Heart right ventricle (tissue), 16 donors: ENCODE measurements at regions of chr19 and their contacts with region 1.

Region 1: GRCh38 chr19:14689598-14690503 is at the start of gene ZNF333:
- DNase-seq: peak; percentile 97 to 99
- ATAC-seq: peak; percentile 98 to 100 (median 99)
- H3K4me3 ChIP-seq: peak within 1 kb of the TSS; percentile 59 to 96 (median 88)
- H3K27ac ChIP-seq: peak within 1 kb of the TSS; percentile 47 to 98 (median 95)
- H3K4me1 ChIP-seq: peaks cover 3 to 28% (median 13%) of the 10 kb centered on the region in 9 donors
- H3K27me3 ChIP-seq: no peaks in the 10 kb centered on the region
- CTCF ChIP-seq: no peak
- total RNA-seq, gene ZNF333: 5.8 to 10.3 (median 8.5) TPM

Region 2: GRCh38 chr19:14571695-14572490 is 118.0 kb before region 1 on chr19 and contains the start of gene NDUFB7:
- intact Hi-C with region 1: loop called in 9 of 10 experiments (anchors 2 to 10 kb)
- DNase-seq: peak; percentile 89 to 92
- ATAC-seq: peak; percentile 95 to 98 (median 98)
- H3K4me3 ChIP-seq: peak within 1 kb of the TSS; percentile 69 to 99 (median 96)
- H3K27ac ChIP-seq: peak within 1 kb of the TSS; percentile 70 to 95 (median 92)
- H3K4me1 ChIP-seq: peaks cover 4 to 47% (median 32%) of the 10 kb centered on the region in 9 donors
- H3K27me3 ChIP-seq: no peaks in the 10 kb centered on the region
- CTCF ChIP-seq: peak; percentile 53 to 91 (median 70)
- total RNA-seq, gene NDUFB7: 347 to 525 (median 467) TPM

Region 3: DNA sequence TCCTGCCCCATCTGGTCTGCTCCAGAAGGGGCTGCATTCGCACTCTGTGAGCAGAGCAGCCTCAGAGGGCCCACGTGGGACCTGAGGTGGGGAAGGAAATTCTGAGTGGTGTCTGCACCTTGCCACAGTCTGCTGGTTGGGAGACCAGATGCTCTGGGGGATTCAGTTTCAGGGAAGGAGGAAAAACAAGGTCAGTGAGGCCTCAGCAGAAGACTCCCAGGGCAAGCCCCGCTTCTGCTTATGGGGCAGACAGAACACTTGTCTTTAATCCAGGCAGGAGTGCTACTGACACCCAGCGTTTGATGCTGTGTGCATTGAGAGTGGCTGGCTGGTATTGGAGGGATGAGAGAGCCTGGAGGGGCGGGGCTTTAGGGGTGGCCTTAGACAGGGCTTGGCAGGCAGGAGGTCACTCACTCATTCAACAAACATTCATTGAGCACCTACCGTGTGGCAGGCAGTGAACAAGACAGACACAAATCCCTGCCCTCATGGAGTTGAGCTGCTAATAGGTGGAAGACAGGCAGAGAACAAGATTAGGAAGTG is 111.9 kb before region 1 on chr19:
- intact Hi-C with region 1: loop called in 9 of 10 experiments (anchors 2 to 10 kb)
- DNase-seq: no peak
- ATAC-seq: no peak
- H3K4me3 ChIP-seq: no peak overlapping the region
- H3K27ac ChIP-seq: no peak overlapping the region
- H3K4me1 ChIP-seq: peaks cover 0 to 11% (median 0%) of the 10 kb centered on the region in 9 donors
- H3K27me3 ChIP-seq: no peaks in the 10 kb centered on the region
- CTCF ChIP-seq: no peak